ENCODE measurements at regions of chr17 and their contacts with region 1.

Region 1: DNA sequence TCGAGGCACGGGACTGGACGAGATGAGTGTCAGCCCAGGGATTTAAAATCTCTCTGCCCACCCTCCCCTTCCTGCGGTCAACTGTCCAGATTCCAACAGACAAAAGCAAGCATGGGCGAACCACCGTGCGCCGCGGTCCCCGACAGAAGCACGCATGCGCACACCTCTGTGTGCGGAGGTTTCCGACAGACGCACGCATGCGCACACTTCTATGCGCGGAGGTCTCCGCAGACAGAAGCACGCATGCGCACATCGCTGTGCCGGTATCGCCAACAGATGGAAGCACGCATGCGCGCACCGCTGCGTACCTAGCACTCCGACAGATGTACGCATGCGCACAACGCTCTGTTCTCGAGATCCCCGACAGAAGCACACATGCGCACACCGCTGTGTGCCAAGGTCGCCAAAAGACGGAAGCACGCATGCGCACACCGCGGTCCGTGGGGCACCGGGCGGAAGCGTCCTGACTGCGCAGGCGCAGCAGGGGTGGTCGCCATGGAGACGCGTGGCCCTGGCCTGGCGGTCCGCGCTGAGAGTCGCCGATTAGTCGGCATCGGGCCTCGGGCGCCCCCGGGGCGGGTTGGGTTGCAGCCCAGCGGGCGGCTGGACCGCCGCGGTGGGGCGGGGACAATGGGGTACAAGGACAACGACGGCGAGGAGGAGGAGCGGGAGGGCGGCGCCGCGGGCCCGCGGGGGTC is 57.4 kb upstream of the RPH3AL start:
- DNase-seq: peak; percentile 99 to 100 (median 100)
- ATAC-seq: peak; percentile 29
- H3K4me3 ChIP-seq: peak overlapping the region; percentile 72 to 80
- H3K4me3 Mint-ChIP-seq: peak overlapping the region; percentile 95
- H3K27ac ChIP-seq: peak overlapping the region; percentile 89 to 90
- H3K27ac Mint-ChIP-seq: peak overlapping the region; percentile 99
- H3K4me1 ChIP-seq: peaks cover 45% of the 10 kb centered on the region
- H3K4me1 Mint-ChIP-seq: peaks cover 51% of the 10 kb centered on the region
- H3K27me3 ChIP-seq: no peaks in the 10 kb centered on the region
- H3K27me3 Mint-ChIP-seq: no peaks in the 10 kb centered on the region
- CTCF ChIP-seq: no peak

Region 2: DNA sequence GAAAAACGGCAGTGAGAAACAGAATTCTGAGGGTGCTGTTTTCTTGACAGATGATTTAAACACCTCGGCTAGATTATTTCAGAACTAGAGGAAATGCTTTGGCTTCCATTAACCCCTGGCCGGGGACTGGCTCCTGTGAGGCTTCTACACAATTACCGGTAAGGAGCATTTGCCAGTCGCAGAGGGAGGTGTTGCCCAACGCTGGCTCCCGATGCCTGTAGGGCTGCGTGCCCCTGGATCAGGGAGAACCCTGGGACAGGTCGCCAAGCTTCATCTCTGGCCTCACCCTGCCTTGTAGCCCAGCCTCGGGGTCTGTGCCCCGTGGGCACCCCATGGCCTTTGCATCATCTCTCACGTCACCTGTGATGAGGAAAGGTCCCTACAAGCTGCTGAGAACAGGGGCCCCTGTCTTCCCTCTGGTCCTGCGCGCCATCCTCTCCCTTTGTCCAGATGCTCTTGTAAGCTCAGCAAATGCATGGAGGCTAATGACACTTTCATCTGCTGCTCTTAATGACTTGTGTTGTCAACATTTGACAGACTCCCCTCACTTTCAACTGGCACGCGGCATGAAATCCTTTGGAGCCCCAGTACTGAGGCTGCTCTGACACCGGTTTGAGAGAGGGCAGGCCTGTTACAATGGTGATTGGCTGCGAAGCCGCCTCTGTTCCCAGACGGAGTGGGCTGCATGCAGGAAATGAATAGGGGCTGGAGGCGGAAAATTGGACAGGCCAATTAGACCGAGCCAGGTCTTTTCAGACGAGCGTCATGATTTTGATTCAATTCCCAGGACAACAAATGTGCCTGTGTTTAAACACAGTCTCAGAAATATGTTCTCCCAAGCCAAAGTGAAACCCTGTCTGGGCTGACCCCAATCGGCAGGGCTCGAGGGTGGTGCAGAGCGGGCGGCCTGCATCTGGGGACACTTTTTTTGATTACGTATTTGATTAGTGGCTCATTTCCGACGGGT is 143.0 kb before region 1 on chr17:
- CTCF ChIA-PET with region 1: no interaction called
- POLR2A ChIA-PET with region 1: no interaction called
- intact Hi-C with region 1: no loop called
- DNase-seq: no peak
- ATAC-seq: no peak
- H3K4me3 ChIP-seq: no peak overlapping the region
- H3K4me3 Mint-ChIP-seq: no peak overlapping the region
- H3K27ac ChIP-seq: no peak overlapping the region
- H3K27ac Mint-ChIP-seq: no peak overlapping the region
- H3K4me1 ChIP-seq: no peaks in the 10 kb centered on the region
- H3K4me1 Mint-ChIP-seq: no peaks in the 10 kb centered on the region
- H3K27me3 ChIP-seq: no peaks in the 10 kb centered on the region
- H3K27me3 Mint-ChIP-seq: peaks cover 2% of the 10 kb centered on the region
- CTCF ChIP-seq: no peak

Region 3: DNA sequence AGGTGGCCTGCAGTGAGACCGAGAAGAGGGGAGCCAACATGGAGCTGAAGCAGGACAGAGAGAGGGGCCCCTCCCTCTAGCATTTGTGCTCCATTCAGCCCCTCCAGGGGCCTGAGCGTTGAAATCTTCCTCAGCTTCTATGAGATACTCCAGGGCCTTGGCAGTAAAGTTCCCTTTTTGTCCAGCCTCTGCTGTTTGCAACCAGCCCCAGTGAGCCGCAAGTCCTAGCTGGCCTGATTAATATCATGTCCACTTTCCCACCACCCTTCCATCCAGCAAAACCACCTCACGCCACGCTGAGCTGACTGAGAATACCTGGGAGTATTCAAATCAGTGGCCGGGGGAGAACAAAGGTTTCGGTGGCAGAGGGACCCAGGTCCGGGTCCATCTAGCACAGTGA is 45.7 kb before region 1 on chr17:
- CTCF ChIA-PET with region 1: no interaction called
- POLR2A ChIA-PET with region 1: no interaction called
- intact Hi-C with region 1: no loop called
- DNase-seq: no peak
- ATAC-seq: no peak
- H3K4me3 ChIP-seq: no peak overlapping the region
- H3K4me3 Mint-ChIP-seq: no peak overlapping the region
- H3K27ac ChIP-seq: no peak overlapping the region
- H3K27ac Mint-ChIP-seq: no peak overlapping the region
- H3K4me1 ChIP-seq: peaks cover 17% of the 10 kb centered on the region
- H3K4me1 Mint-ChIP-seq: peaks cover 27% of the 10 kb centered on the region
- H3K27me3 ChIP-seq: no peaks in the 10 kb centered on the region
- H3K27me3 Mint-ChIP-seq: no peaks in the 10 kb centered on the region
- CTCF ChIP-seq: no peak

Region 4: DNA sequence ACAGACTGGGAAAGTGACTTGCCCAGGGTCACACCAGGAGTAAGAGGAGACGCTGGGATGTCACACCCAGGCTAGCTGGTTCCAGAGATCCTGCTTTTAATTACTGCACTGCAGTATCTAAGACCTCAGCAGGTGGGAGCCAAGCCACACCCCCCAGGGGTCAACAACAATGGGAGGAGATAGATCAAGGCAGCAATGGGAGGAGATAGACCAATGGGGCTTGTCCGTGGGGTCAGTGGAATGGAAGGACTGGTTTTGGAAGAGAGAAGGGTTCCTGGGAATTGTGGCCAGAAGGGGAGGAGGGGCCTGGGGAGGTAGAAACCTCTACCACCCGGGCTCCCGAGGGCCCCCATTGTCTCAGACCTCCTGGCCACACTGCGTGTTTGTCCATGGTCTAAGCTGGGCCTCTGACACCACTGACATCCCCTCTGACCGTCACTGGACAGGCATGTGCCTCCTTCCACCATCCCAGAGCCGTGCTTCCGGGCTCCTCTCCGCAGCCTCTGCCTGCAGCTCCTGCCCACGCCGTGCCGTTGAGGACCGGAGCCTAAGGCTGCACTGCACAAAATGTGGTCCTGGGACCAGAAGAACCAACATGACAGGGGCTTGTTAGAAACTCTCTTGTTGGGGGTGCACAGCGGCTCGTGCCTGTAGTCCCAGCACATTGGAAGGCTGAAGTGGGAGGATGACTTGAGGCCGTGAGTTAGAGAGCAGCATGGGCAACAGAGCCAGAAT is 12.4 kb after region 1 on chr17:
- CTCF ChIA-PET with region 1: interaction called, 20 read pairs
- POLR2A ChIA-PET with region 1: interaction called, 6 read pairs
- intact Hi-C with region 1: no loop called
- DNase-seq: no peak
- ATAC-seq: no peak
- H3K4me3 ChIP-seq: no peak overlapping the region
- H3K4me3 Mint-ChIP-seq: no peak overlapping the region
- H3K27ac ChIP-seq: no peak overlapping the region
- H3K27ac Mint-ChIP-seq: no peak overlapping the region
- H3K4me1 ChIP-seq: peaks cover 39% of the 10 kb centered on the region
- H3K4me1 Mint-ChIP-seq: peaks cover 39% of the 10 kb centered on the region
- H3K27me3 ChIP-seq: no peaks in the 10 kb centered on the region
- H3K27me3 Mint-ChIP-seq: no peaks in the 10 kb centered on the region
- CTCF ChIP-seq: no peak

Region 5: GRCh38 chr17:534071-534691 is 124.2 kb after region 1 on chr17:
- CTCF ChIA-PET with region 1: interaction called, 11 read pairs
- POLR2A ChIA-PET with region 1: interaction called, 8 read pairs
- intact Hi-C with region 1: no loop called
- DNase-seq: peak in 1 of 9 experiments; percentile 15
- ATAC-seq: no peak
- H3K4me3 ChIP-seq: no peak overlapping the region
- H3K4me3 Mint-ChIP-seq: no peak overlapping the region
- H3K27ac ChIP-seq: no peak overlapping the region
- H3K27ac Mint-ChIP-seq: peak overlapping the region; percentile 71
- H3K4me1 ChIP-seq: no peaks in the 10 kb centered on the region
- H3K4me1 Mint-ChIP-seq: peaks cover 4% of the 10 kb centered on the region
- H3K27me3 ChIP-seq: no peaks in the 10 kb centered on the region
- H3K27me3 Mint-ChIP-seq: no peaks in the 10 kb centered on the region
- CTCF ChIP-seq: no peak

Region 6: DNA sequence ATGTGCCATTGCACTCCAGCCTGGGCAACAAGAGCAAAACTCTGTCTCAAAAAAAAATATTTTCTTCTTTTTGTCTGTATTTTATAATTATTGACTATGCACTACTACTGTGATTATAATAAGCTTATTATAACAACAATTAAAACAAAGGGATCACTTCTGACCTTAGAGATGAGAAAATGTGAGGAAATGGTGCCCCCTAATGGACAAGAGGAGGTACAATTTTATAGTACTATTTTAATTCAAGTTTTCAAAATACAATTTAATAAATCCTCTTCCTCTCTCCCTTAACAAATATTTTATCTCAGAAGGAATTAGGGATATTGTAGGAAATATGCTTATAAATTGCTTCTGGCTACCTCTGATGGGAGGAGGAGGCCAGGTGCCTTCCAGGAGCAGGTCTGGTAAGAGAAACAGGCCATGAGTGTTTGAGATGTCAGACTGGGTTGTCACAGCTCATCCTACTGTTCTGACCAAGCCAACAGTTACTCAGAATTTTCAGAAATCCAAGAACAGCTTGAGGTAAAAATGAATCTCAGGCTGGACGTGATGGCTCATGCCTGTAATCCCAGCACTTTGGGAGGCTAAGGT is 290.6 kb after region 1 on chr17:
- CTCF ChIA-PET with region 1: interaction called, 136 read pairs
- POLR2A ChIA-PET with region 1: interaction called, 13 read pairs
- intact Hi-C with region 1: loop called (anchors 1 kb)
- DNase-seq: peak in 2 of 9 experiments; percentile 59 to 70
- ATAC-seq: peak; percentile 74
- H3K4me3 ChIP-seq: no peak overlapping the region
- H3K4me3 Mint-ChIP-seq: no peak overlapping the region
- H3K27ac ChIP-seq: no peak overlapping the region
- H3K27ac Mint-ChIP-seq: no peak overlapping the region
- H3K4me1 ChIP-seq: no peaks in the 10 kb centered on the region
- H3K4me1 Mint-ChIP-seq: peaks cover 2% of the 10 kb centered on the region
- H3K27me3 ChIP-seq: no peaks in the 10 kb centered on the region
- H3K27me3 Mint-ChIP-seq: no peaks in the 10 kb centered on the region
- CTCF ChIP-seq: peak; percentile 84

Region 7: GRCh38 chr17:752002-752619 is 342.1 kb after region 1 on chr17 and contains the start of gene GEMIN4:
- CTCF ChIA-PET with region 1: interaction called, 5 read pairs
- POLR2A ChIA-PET with region 1: no interaction called
- intact Hi-C with region 1: loop called (anchors 1 kb)
- DNase-seq: peak; percentile 94 to 100 (median 98)
- ATAC-seq: peak; percentile 89
- H3K4me3 ChIP-seq: peak within 1 kb of the TSS; percentile 77 to 94
- H3K4me3 Mint-ChIP-seq: peak within 1 kb of the TSS; percentile 96
- H3K27ac ChIP-seq: peak within 1 kb of the TSS; percentile 60 to 65
- H3K27ac Mint-ChIP-seq: peak within 1 kb of the TSS; percentile 97
- H3K4me1 ChIP-seq: peaks cover 28% of the 10 kb centered on the region
- H3K4me1 Mint-ChIP-seq: peaks cover 41% of the 10 kb centered on the region
- H3K27me3 ChIP-seq: no peaks in the 10 kb centered on the region
- H3K27me3 Mint-ChIP-seq: no peaks in the 10 kb centered on the region
- CTCF ChIP-seq: peak; percentile 86
- total RNA-seq, gene GEMIN4: 19.1 to 19.2 TPM

Region 8: DNA sequence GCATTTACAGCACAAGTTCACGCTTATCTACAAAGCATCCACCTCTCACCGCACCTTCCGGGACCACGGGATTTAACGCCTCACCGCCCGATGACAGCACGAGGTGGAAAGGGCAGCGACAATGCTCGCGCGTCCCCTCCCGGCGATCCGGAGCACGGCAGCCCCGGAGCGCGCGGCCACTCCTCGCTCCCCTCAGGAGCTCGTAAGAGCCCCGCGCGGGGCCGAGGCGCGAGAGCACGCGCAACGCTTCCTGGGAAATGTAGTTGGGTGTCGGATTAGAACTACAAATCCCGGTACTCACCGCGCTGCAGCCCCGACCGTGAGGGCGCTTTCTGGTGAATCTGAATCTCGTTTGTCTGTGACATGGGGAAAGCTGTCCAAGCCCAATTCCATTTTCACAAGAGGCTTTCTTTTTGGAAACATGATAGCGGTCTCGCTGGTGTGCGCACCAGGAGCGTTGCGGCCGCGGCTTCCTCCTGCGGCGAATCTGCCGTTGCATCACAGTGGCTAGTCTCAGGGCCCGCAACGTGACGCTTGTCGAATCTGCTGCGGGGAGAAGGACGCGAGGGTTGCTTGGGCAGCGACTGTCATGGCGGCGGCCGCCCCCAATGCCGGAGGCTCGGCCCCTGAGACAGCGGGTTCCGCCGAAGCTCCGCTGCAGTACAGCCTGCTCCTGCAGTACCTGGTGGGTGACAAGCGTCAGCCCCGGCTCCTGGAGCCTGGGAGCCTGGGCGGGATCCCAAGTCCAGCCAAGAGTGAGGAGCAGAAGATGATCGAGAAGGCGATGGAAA is 586.8 kb after region 1 on chr17 and contains the start of gene TIMM22:
- CTCF ChIA-PET with region 1: no interaction called
- POLR2A ChIA-PET with region 1: no interaction called
- intact Hi-C with region 1: loop called (anchors 1 kb)
- DNase-seq: peak; percentile 84 to 98 (median 92)
- ATAC-seq: peak; percentile 93
- H3K4me3 ChIP-seq: peak within 1 kb of the TSS; percentile 86 to 97
- H3K4me3 Mint-ChIP-seq: peak within 1 kb of the TSS; percentile 99
- H3K27ac ChIP-seq: peak within 1 kb of the TSS; percentile 70 to 90
- H3K27ac Mint-ChIP-seq: peak within 1 kb of the TSS; percentile 97
- H3K4me1 ChIP-seq: peaks cover 9% of the 10 kb centered on the region
- H3K4me1 Mint-ChIP-seq: peaks cover 24% of the 10 kb centered on the region
- H3K27me3 ChIP-seq: no peaks in the 10 kb centered on the region
- H3K27me3 Mint-ChIP-seq: no peaks in the 10 kb centered on the region
- CTCF ChIP-seq: peak; percentile 90
- total RNA-seq, gene TIMM22: 13.2 to 14.0 TPM